Ovary (tissue), 10 donors: ENCODE measurements at regions of chr3 and their contacts with region 1.

Region 1: DNA sequence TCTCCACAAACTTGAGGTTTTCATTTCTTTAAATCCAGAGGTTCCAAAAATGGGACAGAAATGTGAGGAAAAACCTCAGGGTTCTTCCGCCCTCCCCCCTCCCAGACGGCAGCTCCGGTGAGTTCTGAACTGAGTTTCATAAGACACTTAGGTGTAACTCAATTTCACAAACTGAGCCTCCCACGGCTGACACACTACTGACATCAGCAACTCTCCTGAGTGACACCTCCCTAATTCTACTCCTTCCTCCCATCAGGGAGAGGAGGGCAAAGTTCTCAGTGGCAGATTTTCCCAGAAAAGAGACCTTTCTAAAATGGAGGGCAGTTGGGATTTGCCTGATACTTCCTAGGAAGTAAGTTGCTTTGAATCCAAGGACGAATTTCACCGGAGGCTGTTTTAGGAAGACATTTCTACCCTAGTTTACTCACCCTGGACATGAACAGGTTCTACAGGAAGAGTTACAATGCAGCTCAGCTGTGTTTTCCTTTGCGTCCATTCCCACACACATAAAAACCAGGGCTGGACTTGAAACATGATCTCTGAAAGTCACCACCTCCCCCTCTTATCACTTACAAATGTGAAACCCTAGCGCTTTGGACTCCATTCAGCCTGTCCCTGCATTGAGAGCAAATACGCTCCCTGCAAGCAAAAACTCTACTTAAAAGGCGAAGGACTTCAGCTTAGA is 78.1 kb upstream of the LMOD3 start:
- DNase-seq: peak in 3 of 5 donors; percentile 21 to 41 (median 37)
- H3K4me3 ChIP-seq: peak overlapping the region; percentile 15
- H3K27ac ChIP-seq: peak overlapping the region in 1 of 2 donors; percentile 11
- H3K4me1 ChIP-seq: no peaks in the 10 kb centered on the region
- H3K27me3 ChIP-seq: no peaks in the 10 kb centered on the region
- CTCF ChIP-seq: no peak
- EP300 ChIP-seq: no peak
- POLR2A ChIP-seq: no peak

Region 2: GRCh38 chr3:69294014-69294775 is 93.7 kb after region 1 on chr3:
- intact Hi-C with region 1: loop called in 1 of 4 experiments (anchors 10 kb)
- DNase-seq: peak in 1 of 5 donors; percentile 17
- H3K4me3 ChIP-seq: no peak overlapping the region
- H3K27ac ChIP-seq: no peak overlapping the region
- H3K4me1 ChIP-seq: peaks cover 2% of the 10 kb centered on the region
- H3K27me3 ChIP-seq: no peaks in the 10 kb centered on the region
- CTCF ChIP-seq: no peak
- EP300 ChIP-seq: no peak
- POLR2A ChIP-seq: no peak

Region 3: GRCh38 chr3:69811452-69812401 is 611.2 kb after region 1 on chr3:
- intact Hi-C with region 1: loop called in 1 of 4 experiments (anchors 5 kb)
- DNase-seq: no peak
- H3K4me3 ChIP-seq: no peak overlapping the region
- H3K27ac ChIP-seq: no peak overlapping the region
- H3K4me1 ChIP-seq: peaks cover 6% of the 10 kb centered on the region
- H3K27me3 ChIP-seq: no peaks in the 10 kb centered on the region
- CTCF ChIP-seq: no peak
- EP300 ChIP-seq: no peak
- POLR2A ChIP-seq: no peak